SK-N-SH (cell line): ENCODE measurements at regions of chr1 and their contacts with region 1.

Region 1: DNA sequence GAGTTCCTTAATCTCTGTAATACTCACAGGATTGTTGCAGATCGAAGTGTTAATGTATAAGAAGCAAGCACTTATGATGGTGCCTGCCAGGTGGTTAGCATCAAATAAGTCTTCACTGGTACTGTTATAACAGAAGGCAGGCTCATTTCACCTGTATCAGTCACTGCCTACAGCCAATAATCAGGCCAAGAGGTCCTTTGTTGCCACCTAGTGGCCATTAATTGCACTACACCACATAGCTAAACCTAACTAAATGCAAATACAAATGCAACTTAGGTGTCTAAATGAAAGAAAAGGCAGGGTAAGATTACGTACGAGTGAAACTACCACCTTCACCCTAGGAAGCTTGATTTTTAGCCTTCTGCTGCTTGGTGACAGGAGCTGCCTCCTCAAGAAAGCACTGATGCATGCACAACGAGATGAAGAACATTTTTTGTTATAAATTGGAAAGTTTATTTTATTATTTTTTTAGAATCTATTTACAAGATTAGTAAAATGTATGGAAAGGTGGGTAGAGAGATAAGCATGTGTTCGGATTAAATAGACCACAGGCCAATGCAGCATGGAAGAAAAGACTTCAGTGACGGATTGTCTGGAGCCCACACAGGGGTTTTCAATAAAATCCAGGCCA is 334.8 kb upstream of the CAMK1G start:
- DNase-seq: peak; percentile 53
- H3K4me3 ChIP-seq: peak overlapping the region in 1 of 2 experiments; percentile 22; a peak in 1 of 4 replicates
- H3K27ac ChIP-seq: peak overlapping the region; percentile 41 to 98; a peak in 3 of 4 replicates
- H3K4me1 ChIP-seq: peaks cover 0 to 50% of the 10 kb centered on the region in 2 experiments; a peak in 2 of 4 replicates
- H3K27me3 ChIP-seq: no peaks in the 10 kb centered on the region
- CTCF ChIP-seq: peak; percentile 95
- EP300 ChIP-seq: no peak
- RAD21 ChIP-seq: peak; percentile 93

Region 2: GRCh38 chr1:209207701-209208286 is 41.0 kb before region 1 on chr1:
- CTCF ChIA-PET with region 1: interaction called, 261 read pairs
- POLR2A ChIA-PET with region 1: interaction called, 3 read pairs
- DNase-seq: peak; percentile 87
- H3K4me3 ChIP-seq: peak overlapping the region; percentile 38 to 49
- H3K27ac ChIP-seq: peak overlapping the region in 1 of 2 experiments; percentile 71; a peak in 2 of 4 replicates
- H3K4me1 ChIP-seq: peaks cover 0 to 23% of the 10 kb centered on the region in 2 experiments; a peak in 3 of 4 replicates
- H3K27me3 ChIP-seq: no peaks in the 10 kb centered on the region
- CTCF ChIP-seq: peak; percentile 87
- EP300 ChIP-seq: no peak
- RAD21 ChIP-seq: peak; percentile 92

Region 3: GRCh38 chr1:209229494-209230059 is 19.2 kb before region 1 on chr1:
- CTCF ChIA-PET with region 1: interaction called, 14 read pairs
- POLR2A ChIA-PET with region 1: no interaction called
- DNase-seq: no peak
- H3K4me3 ChIP-seq: no peak overlapping the region
- H3K27ac ChIP-seq: no peak overlapping the region
- H3K4me1 ChIP-seq: no peaks in the 10 kb centered on the region; a peak in 1 of 4 replicates
- H3K27me3 ChIP-seq: no peaks in the 10 kb centered on the region
- CTCF ChIP-seq: no peak
- EP300 ChIP-seq: no peak
- RAD21 ChIP-seq: no peak

Region 4: GRCh38 chr1:209266590-209267172 is 17.9 kb after region 1 on chr1:
- CTCF ChIA-PET with region 1: interaction called, 24 read pairs
- POLR2A ChIA-PET with region 1: no interaction called
- DNase-seq: no peak
- H3K4me3 ChIP-seq: no peak overlapping the region
- H3K27ac ChIP-seq: no peak overlapping the region
- H3K4me1 ChIP-seq: peaks cover 0 to 7% of the 10 kb centered on the region in 2 experiments; a peak in 2 of 4 replicates
- H3K27me3 ChIP-seq: no peaks in the 10 kb centered on the region
- CTCF ChIP-seq: no peak
- EP300 ChIP-seq: no peak
- RAD21 ChIP-seq: no peak

Region 5: GRCh38 chr1:209354111-209354839 is 105.5 kb after region 1 on chr1:
- CTCF ChIA-PET with region 1: interaction called, 133 read pairs
- POLR2A ChIA-PET with region 1: interaction called, 5 read pairs
- DNase-seq: peak; percentile 68
- H3K4me3 ChIP-seq: peak overlapping the region in 1 of 2 experiments; percentile 10; a peak in 1 of 4 replicates
- H3K27ac ChIP-seq: peak overlapping the region in 1 of 2 experiments; percentile 60; a peak in 2 of 4 replicates
- H3K4me1 ChIP-seq: peaks cover 0 to 38% of the 10 kb centered on the region in 2 experiments; a peak in 2 of 4 replicates
- H3K27me3 ChIP-seq: no peaks in the 10 kb centered on the region
- CTCF ChIP-seq: peak; percentile 94
- EP300 ChIP-seq: peak; percentile 22 to 58; a peak in 3 of 4 replicates
- RAD21 ChIP-seq: peak; percentile 97

Region 6: GRCh38 chr1:209565759-209566678 is 317.3 kb after region 1 on chr1:
- CTCF ChIA-PET with region 1: interaction called, 22 read pairs
- POLR2A ChIA-PET with region 1: no interaction called
- DNase-seq: peak; percentile 69
- H3K4me3 ChIP-seq: no peak overlapping the region
- H3K27ac ChIP-seq: no peak overlapping the region; a peak in 1 of 4 replicates
- H3K4me1 ChIP-seq: peaks cover 10 to 11% of the 10 kb centered on the region in 2 experiments; a peak in 3 of 4 replicates
- H3K27me3 ChIP-seq: no peaks in the 10 kb centered on the region
- CTCF ChIP-seq: peak; percentile 82
- EP300 ChIP-seq: no peak
- RAD21 ChIP-seq: peak; percentile 87